Gastrocnemius medialis (tissue), 4 donors: ENCODE measurements at regions of chr20 and their contacts with region 1.

Region 1: DNA sequence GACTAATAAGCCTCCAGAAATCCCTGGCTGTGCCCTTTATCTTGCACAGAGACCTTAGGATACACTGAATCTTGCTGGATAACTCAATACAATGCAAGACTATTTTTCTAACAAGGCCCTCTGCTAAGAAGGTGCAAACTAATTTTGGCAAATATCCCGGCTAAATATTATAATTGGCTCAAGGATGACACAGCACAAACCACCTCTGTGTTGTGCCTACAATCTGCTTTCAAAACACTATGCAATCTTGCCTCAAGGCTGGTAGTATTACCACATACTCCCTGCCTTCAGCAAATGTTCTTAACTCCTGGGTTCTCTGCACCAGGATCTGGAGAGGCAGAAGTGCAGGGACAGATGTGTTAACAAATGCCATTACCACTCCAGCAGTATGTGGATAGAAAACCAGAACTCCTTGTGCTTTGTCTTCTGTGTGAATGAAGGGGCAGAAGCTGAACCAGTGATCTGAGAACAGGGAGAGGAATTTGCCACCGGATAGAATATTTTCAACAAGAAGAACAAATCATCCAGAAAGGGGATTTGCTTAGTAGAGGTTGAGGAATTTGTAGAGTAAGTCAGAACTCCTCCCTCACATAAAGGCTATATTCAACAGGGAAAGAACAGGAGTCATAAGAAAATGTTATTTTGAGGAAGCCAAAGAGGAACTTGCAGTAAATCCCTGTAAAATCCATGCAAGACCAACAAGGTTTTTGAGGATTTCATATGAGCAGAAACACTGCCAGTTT is 74.1 kb upstream of the SLC4A11 start:
- DNase-seq: peak in 1 of 2 donors; percentile 49
- ATAC-seq: peak; percentile 84 to 88
- H3K4me3 ChIP-seq: no peak overlapping the region
- H3K27ac ChIP-seq: peak overlapping the region; percentile 77 to 95 (median 92)
- H3K4me1 ChIP-seq: peaks cover 60 to 73% of the 10 kb centered on the region in 2 donors
- H3K27me3 ChIP-seq: no peaks in the 10 kb centered on the region
- CTCF ChIP-seq: no peak
- POLR2A ChIP-seq: no peak

Region 2: DNA sequence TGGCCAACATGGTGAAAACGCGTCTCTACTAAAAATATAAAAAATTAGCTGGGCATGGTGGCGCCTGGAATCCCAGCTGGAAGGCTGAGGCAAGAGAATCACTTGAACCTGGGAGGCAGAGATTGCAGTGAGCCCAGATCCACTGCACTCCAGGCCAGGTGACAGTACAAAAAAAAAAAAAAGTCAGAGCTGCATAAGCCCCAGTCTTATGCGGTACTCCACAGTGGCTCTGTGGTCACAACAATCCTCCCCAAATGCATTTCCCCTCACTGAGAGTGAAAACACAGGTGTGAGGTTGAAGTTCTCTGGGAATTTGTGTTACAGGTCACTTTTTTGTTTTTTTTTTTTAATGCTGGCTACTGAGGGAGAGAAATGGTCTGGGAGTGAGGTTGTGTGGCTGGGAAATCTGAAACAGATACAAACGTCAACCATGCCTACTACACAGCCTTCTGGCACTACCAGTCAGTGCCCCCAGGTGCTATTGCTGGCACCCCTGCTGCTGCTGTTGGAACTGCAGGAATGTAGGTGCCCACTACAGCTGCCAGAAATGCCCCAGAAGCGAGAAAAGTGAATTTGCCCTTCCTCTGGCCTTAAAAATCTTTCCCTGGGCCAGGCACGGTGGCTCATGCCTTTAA is 261.6 kb before region 1 on chr20:
- in situ Hi-C with region 1: loop called in 2 of 4 experiments (anchors 10 to 25 kb)
- intact Hi-C with region 1: loop called (anchors 1 kb)
- DNase-seq: no peak
- ATAC-seq: no peak
- H3K4me3 ChIP-seq: no peak overlapping the region
- H3K27ac ChIP-seq: no peak overlapping the region
- H3K4me1 ChIP-seq: peaks cover 5 to 14% of the 10 kb centered on the region in 2 donors
- H3K27me3 ChIP-seq: no peaks in the 10 kb centered on the region
- CTCF ChIP-seq: no peak
- POLR2A ChIP-seq: no peak

Region 3: GRCh38 chr20:3068986-3069900 is 243.9 kb before region 1 on chr20:
- in situ Hi-C with region 1: loop called in 1 of 4 experiments (anchors 25 kb)
- intact Hi-C with region 1: no loop called
- DNase-seq: peak in 1 of 2 donors; percentile 15
- ATAC-seq: peak; percentile 49 to 83
- H3K4me3 ChIP-seq: no peak overlapping the region
- H3K27ac ChIP-seq: no peak overlapping the region
- H3K4me1 ChIP-seq: no peaks in the 10 kb centered on the region
- H3K27me3 ChIP-seq: peaks cover 13 to 24% (median 19%) of the 10 kb centered on the region in 3 donors
- CTCF ChIP-seq: peak in 1 of 5 experiments; percentile 29
- POLR2A ChIP-seq: no peak

Region 4: GRCh38 chr20:3115190-3116107 is 197.7 kb before region 1 on chr20:
- in situ Hi-C with region 1: no loop called
- intact Hi-C with region 1: loop called (anchors 5 kb)
- DNase-seq: peak in 1 of 2 donors; percentile 39
- ATAC-seq: peak; percentile 16 to 42
- H3K4me3 ChIP-seq: no peak overlapping the region
- H3K27ac ChIP-seq: no peak overlapping the region
- H3K4me1 ChIP-seq: peaks cover 4 to 16% of the 10 kb centered on the region in 2 donors
- H3K27me3 ChIP-seq: no peaks in the 10 kb centered on the region
- CTCF ChIP-seq: peak; percentile 43 to 82 (median 63)
- POLR2A ChIP-seq: no peak

Region 5: DNA sequence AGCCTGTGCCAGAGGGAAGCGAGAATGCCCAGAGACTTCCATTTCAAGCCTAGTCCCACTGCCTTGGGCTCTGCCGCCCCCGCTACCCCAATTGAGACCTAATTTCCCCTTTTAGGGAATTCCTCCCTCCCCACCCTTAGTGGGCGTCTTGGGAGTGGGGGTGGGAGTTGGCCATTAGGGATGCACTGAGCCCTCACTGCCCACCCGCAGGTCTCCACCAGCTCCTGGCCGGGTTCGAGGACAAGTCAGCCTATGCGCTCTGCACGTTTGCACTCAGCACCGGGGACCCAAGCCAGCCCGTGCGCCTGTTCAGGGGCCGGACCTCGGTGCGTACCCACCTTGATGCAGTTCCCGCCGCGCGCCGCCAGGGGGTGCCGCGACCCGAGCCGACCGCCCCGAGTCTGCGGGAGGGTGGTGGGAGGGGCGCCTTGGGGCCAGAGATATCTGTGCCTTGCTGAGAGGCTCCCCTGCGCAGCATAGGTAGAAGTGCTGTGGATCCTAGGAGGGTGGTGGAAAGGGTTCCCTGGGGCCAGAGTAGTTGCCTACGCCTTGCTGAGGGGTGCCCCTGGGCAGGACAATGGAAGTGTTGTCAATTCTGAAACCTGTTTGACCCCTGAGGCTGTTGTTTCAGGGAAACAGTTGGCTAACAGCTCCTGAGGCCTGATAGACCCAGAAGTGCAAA is 94.7 kb before region 1 on chr20:
- in situ Hi-C with region 1: loop called in 3 of 4 experiments (anchors 5 to 10 kb)
- intact Hi-C with region 1: loop called (anchors 1 kb)
- DNase-seq: peak in 1 of 2 donors; percentile 45
- ATAC-seq: peak in 1 of 2 donors; percentile 32
- H3K4me3 ChIP-seq: no peak overlapping the region
- H3K27ac ChIP-seq: no peak overlapping the region
- H3K4me1 ChIP-seq: peaks cover 23 to 26% of the 10 kb centered on the region in 2 donors
- H3K27me3 ChIP-seq: no peaks in the 10 kb centered on the region
- CTCF ChIP-seq: peak; percentile 77 to 96 (median 92)
- POLR2A ChIP-seq: no peak

Region 6: DNA sequence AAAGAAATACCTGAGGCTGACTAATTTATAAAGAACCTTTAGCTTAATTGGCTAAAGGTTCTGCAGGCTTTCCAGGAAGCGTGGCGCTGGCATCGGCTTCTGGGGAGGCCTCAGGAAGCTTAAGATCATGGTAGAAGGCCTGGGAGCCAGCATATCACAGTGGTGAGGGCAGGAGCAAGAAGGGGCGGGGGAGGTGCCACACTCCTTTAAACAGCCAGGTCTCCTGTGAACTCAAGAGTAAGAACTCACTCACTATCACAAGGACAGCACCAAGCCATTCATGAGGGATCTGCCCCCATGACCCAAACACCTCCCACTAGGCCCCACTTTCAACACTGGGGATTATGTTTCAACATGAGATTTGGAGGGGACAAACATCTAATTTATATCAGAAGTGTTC is 39.7 kb before region 1 on chr20:
- in situ Hi-C with region 1: no loop called
- intact Hi-C with region 1: no loop called
- DNase-seq: no peak
- ATAC-seq: no peak
- H3K4me3 ChIP-seq: no peak overlapping the region
- H3K27ac ChIP-seq: no peak overlapping the region
- H3K4me1 ChIP-seq: peaks cover 23 to 28% of the 10 kb centered on the region in 2 donors
- H3K27me3 ChIP-seq: no peaks in the 10 kb centered on the region
- CTCF ChIP-seq: no peak
- POLR2A ChIP-seq: no peak